ENCODE measurements at regions of chr6 and their contacts with region 1.

Region 1: GRCh38 chr6:32047850-32048766 is 9.9 kb downstream of the CYP21A2 start:
- DNase-seq: peak; percentile 86

Region 2: DNA sequence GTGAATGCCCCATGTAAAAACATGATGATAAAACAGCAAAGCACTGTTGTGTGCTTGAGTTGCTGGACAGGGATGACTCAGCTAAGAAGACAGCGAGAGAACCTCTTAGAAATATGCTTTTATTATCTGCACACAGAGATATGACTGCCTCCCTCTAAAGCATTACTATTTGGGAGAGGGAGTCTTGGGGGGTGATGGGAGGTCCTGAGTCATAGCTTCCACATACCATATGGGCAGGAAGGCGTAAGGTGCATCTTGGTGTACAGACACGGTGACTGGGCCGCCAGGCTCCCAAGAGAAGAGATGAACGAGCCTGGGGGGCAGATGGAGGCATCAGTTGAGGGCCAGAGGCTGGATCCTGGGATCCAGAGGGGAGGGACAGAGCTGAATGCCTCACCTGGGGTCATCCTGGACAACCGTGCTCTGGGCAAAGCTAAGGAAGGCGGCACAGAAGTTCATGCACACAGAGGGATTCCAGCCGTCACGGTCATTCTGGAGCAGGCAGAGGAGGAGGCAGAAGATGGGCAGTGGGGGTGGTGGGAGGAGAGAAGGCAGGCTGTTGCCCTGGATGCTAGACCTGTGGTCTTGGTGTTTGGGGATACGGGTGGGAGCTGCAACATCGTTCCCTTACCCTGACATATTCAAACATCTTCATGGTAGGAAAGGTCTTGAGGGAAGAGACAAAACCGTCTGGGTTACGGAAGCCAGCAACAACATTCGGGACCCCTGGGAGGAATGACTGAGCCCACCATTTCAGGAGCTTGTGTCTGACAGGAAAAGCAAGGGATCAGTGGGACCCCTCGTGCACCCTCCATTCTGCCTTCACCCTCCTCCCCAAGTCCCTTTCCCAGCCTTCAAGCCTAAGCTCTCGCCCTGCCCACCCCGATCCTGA is 78.2 kb before region 1 on chr6:
- intact Hi-C with region 1: no loop called
- DNase-seq: no peak

Region 3: GRCh38 chr6:32076321-32076809 is 28.3 kb after region 1 on chr6:
- intact Hi-C with region 1: no loop called
- DNase-seq: no peak

Region 4: DNA sequence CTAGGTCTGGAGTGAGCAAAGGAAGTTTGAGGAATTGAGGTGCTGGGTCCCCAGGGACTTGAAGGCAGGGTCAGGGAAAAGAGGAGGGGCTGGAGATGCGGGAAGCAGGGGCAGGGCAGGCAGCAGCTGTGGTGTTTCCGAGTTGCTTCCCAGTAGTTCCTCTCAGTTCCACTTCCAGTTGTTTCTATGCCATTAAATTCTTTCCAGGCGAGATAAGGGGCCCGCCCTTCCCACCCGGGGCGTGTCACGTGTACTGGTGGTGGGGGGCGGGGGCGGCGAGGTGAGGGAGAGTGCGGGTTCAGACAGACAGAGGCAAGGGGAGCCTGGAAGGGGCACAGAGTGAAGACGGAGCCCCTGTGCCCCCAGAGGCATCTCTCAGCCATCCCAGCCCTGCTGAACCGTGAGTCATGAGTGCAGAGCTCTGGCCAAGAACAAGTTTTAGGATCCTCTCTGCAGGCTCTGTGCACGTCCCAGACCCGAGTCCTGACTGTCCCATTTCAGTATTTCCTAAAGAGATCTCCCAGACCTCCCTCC is 60.1 kb after region 1 on chr6:
- intact Hi-C with region 1: loop called (anchors 2 kb)
- DNase-seq: peak; percentile 79

Measured in cardiac septum (tissue), 1 donor.